Endothelial cell of umbilical vein (primary cell): ENCODE measurements at regions of chr11 and their contacts with region 1.

Region 1: GRCh38 chr11:125874556-125875124 is 12.8 kb upstream of the HYLS1 start:
- DNase-seq: peak; percentile 66
- H3K4me3 ChIP-seq: no peak overlapping the region
- H3K27ac ChIP-seq: no peak overlapping the region
- H3K4me1 ChIP-seq: no peaks in the 10 kb centered on the region
- H3K27me3 ChIP-seq: no peaks in the 10 kb centered on the region
- CTCF ChIP-seq: peak; percentile 70 to 77
- POLR2A ChIP-seq: no peak

Region 2: GRCh38 chr11:125176866-125177265 is 697.8 kb before region 1 on chr11:
- CTCF ChIA-PET with region 1: no interaction called
- POLR2A ChIA-PET with region 1: no interaction called
- dilution Hi-C with region 1: no loop called
- intact Hi-C with region 1: no loop called
- DNase-seq: no peak
- H3K4me3 ChIP-seq: no peak overlapping the region
- H3K27ac ChIP-seq: no peak overlapping the region
- H3K4me1 ChIP-seq: no peaks in the 10 kb centered on the region
- H3K27me3 ChIP-seq: peaks cover 0 to 15% of the 10 kb centered on the region in 2 experiments
- CTCF ChIP-seq: no peak
- POLR2A ChIP-seq: no peak

Region 3: GRCh38 chr11:125423247-125423849 is 451.3 kb before region 1 on chr11:
- CTCF ChIA-PET with region 1: interaction called, 4 read pairs
- POLR2A ChIA-PET with region 1: no interaction called
- dilution Hi-C with region 1: no loop called
- intact Hi-C with region 1: loop called (anchors 1 kb)
- DNase-seq: no peak
- H3K4me3 ChIP-seq: no peak overlapping the region
- H3K27ac ChIP-seq: no peak overlapping the region
- H3K4me1 ChIP-seq: no peaks in the 10 kb centered on the region
- H3K27me3 ChIP-seq: peaks cover 0 to 1% of the 10 kb centered on the region in 2 experiments
- CTCF ChIP-seq: peak; percentile 23 to 39
- POLR2A ChIP-seq: no peak

Region 4: DNA sequence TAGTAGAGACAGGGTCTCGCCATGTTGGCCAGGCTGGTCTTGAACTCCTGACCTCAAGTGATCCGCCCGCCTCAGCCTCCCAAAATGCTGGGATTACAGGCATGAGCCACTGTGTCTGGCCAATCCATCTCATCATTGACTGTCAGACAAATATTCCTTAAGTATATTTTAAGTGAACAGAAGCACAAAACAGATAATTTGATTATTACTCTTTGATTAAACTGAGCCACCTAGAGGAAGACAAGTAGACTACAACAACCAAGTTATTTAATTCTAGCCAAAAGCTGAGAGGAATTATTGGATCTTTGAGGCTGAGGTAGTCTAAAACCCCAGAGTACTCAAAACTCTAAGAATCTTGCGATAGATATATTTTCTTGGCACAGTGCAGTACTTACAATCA is 195.2 kb before region 1 on chr11:
- CTCF ChIA-PET with region 1: interaction called, 3 read pairs
- POLR2A ChIA-PET with region 1: no interaction called
- dilution Hi-C with region 1: no loop called
- intact Hi-C with region 1: loop called (anchors 5 kb)
- DNase-seq: peak; percentile 30
- H3K4me3 ChIP-seq: no peak overlapping the region
- H3K27ac ChIP-seq: no peak overlapping the region
- H3K4me1 ChIP-seq: peaks cover 12% of the 10 kb centered on the region
- H3K27me3 ChIP-seq: no peaks in the 10 kb centered on the region
- CTCF ChIP-seq: peak in 1 of 2 donors; percentile 18
- POLR2A ChIP-seq: no peak

Region 5: DNA sequence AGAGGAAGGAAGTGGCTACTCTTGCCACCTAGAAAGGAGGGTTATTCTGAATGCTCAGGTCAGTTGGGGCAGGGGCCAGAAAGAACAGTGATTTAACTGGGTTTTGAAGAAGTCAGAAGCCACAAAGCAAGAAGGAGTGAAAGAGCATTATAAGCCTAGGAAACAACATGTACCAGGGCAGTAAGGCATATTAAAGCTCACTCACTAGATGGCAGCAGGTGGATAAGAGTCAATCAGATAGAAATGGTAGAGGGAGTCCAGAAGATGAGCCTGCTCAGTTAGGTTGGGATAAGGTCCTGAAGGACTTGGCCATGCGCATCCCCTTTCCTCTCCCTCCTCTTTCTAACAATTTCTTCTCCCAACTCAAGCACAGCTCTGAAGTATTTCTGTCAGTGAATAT is 150.5 kb before region 1 on chr11:
- CTCF ChIA-PET with region 1: interaction called, 29 read pairs
- POLR2A ChIA-PET with region 1: no interaction called
- dilution Hi-C with region 1: no loop called
- intact Hi-C with region 1: loop called (anchors 1 kb)
- DNase-seq: peak; percentile 49
- H3K4me3 ChIP-seq: no peak overlapping the region
- H3K27ac ChIP-seq: no peak overlapping the region
- H3K4me1 ChIP-seq: no peaks in the 10 kb centered on the region
- H3K27me3 ChIP-seq: peaks cover 3 to 6% of the 10 kb centered on the region in 2 experiments
- CTCF ChIP-seq: peak; percentile 9 to 22
- POLR2A ChIP-seq: no peak

Region 6: DNA sequence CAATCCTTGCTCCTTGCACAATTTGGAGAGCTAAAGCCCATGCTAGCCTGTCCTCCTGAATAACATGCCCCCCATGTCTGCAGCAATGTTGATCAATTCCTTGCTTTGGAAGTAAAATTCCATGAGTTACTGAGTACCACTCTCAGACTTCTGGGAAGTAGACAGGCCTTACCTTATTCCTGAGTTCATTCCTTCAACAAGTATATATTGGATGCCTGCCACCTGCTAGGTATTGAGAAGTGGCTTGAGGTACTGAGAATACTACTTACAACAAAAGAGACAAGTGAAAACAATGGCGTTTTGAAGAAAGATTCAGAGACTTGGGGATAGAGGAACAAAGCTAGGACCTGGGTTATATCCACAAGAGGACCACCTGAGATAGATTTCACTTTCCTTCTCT is 108.4 kb before region 1 on chr11:
- CTCF ChIA-PET with region 1: no interaction called
- POLR2A ChIA-PET with region 1: no interaction called
- dilution Hi-C with region 1: no loop called
- intact Hi-C with region 1: no loop called
- DNase-seq: no peak
- H3K4me3 ChIP-seq: no peak overlapping the region
- H3K27ac ChIP-seq: no peak overlapping the region
- H3K4me1 ChIP-seq: no peaks in the 10 kb centered on the region
- H3K27me3 ChIP-seq: peaks cover 0 to 10% of the 10 kb centered on the region in 2 experiments
- CTCF ChIP-seq: no peak
- POLR2A ChIP-seq: no peak

Region 7: GRCh38 chr11:125784678-125785077 is 90.0 kb before region 1 on chr11:
- CTCF ChIA-PET with region 1: no interaction called
- POLR2A ChIA-PET with region 1: no interaction called
- dilution Hi-C with region 1: no loop called
- intact Hi-C with region 1: no loop called
- DNase-seq: no peak
- H3K4me3 ChIP-seq: no peak overlapping the region
- H3K27ac ChIP-seq: no peak overlapping the region
- H3K4me1 ChIP-seq: no peaks in the 10 kb centered on the region
- H3K27me3 ChIP-seq: no peaks in the 10 kb centered on the region
- CTCF ChIP-seq: no peak
- POLR2A ChIP-seq: no peak

Region 8: DNA sequence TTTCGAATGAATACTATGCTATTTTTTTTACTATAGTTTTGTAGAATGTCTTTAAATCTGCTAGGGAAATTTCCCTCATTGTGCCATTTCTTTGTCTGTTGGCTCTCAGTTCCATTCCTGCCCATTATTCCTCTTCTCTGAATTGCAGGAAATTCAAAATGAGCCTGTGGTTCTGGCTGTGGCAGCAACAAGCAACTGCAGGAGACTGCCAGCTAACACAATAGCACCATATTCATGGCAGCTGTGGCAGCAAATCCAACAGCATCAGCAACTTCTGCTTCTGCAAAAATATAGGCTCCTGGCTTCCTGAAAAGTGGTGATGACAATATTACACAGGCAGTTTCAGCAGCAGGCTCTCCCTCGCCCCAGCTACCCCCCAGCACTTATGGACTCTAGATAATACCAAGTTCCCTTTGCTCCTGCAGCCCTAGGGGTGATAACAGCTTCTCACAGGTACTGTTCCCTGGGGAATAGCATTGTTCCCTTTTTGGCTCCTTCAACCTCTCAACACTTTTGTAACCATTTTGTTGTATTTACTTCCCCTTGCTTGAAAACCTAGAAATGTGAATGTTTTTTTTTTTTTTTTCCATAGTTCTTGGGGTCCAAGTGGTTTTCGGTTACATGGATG is 32.2 kb before region 1 on chr11:
- CTCF ChIA-PET with region 1: no interaction called
- POLR2A ChIA-PET with region 1: no interaction called
- dilution Hi-C with region 1: no loop called
- intact Hi-C with region 1: no loop called
- DNase-seq: peak; percentile 22
- H3K4me3 ChIP-seq: no peak overlapping the region
- H3K27ac ChIP-seq: no peak overlapping the region
- H3K4me1 ChIP-seq: no peaks in the 10 kb centered on the region
- H3K27me3 ChIP-seq: no peaks in the 10 kb centered on the region
- CTCF ChIP-seq: no peak
- POLR2A ChIP-seq: no peak